Caco-2 (cell line): ENCODE measurements at regions of chr7 and their contacts with region 1.

Region 1: GRCh38 chr7:88169717-88170320 is 50.0 kb downstream of the SRI start:
- DNase-seq: peak in 1 of 2 experiments; percentile 13
- H3K4me3 ChIP-seq: no peak overlapping the region
- H3K4me3 Mint-ChIP-seq: no peak overlapping the region
- H3K27ac Mint-ChIP-seq: no peak overlapping the region
- H3K4me1 ChIP-seq: no peaks in the 10 kb centered on the region
- H3K4me1 Mint-ChIP-seq: no peaks in the 10 kb centered on the region
- H3K27me3 ChIP-seq: no peaks in the 10 kb centered on the region
- H3K27me3 Mint-ChIP-seq: no peaks in the 10 kb centered on the region
- CTCF ChIP-seq: peak in 1 of 2 experiments; percentile 54

Region 2: DNA sequence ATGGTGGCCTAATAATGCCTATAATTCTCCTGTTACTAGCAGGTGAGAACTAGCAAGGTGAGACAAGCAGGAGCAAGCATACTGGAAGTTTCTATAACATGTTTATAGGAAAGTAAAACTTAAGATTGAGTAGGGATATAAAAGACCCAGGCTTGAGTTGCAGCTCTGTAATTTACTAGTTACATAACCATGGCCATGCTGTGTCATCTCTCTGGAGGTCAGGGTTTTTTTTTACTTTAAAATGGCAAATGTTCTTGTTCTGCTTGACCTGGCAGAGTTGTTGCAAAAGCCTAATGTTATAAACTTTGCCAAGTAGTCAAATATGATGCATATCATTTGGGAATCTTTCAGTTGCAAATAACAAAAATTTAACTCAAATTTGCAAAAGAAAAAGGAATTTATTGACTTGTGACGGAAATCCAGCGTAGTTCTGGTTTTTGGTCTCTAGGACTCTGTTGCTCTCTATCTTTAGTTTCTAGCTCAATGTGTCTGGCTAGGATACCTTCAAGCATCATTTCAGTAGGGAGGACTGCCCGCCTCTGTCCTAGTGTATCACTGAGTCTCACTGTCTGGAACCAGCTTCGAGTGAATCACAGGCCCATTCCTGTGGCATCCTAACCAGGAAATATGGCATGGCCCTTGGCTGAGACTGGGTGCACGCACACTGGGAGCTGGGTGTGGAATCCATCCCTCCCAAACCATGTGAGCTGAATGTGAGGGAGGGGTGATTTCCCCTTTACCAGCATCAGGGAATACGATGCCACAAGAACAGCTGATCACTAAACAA is 167.9 kb before region 1 on chr7:
- CTCF ChIA-PET with region 1: no interaction called
- POLR2A ChIA-PET with region 1: no interaction called
- intact Hi-C with region 1: no loop called
- DNase-seq: no peak
- H3K4me3 ChIP-seq: no peak overlapping the region
- H3K4me3 Mint-ChIP-seq: no peak overlapping the region
- H3K27ac Mint-ChIP-seq: no peak overlapping the region
- H3K4me1 ChIP-seq: no peaks in the 10 kb centered on the region
- H3K4me1 Mint-ChIP-seq: no peaks in the 10 kb centered on the region
- H3K27me3 ChIP-seq: no peaks in the 10 kb centered on the region
- H3K27me3 Mint-ChIP-seq: no peaks in the 10 kb centered on the region
- CTCF ChIP-seq: no peak

Region 3: GRCh38 chr7:88140947-88141346 is 28.9 kb before region 1 on chr7:
- CTCF ChIA-PET with region 1: interaction called, 5 read pairs
- POLR2A ChIA-PET with region 1: no interaction called
- intact Hi-C with region 1: loop called (anchors 2 kb)
- DNase-seq: peak; percentile 62 to 75
- H3K4me3 ChIP-seq: no peak overlapping the region
- H3K4me3 Mint-ChIP-seq: no peak overlapping the region
- H3K27ac Mint-ChIP-seq: peak overlapping the region; percentile 62
- H3K4me1 ChIP-seq: peaks cover 16% of the 10 kb centered on the region
- H3K4me1 Mint-ChIP-seq: peaks cover 8% of the 10 kb centered on the region
- H3K27me3 ChIP-seq: no peaks in the 10 kb centered on the region
- H3K27me3 Mint-ChIP-seq: no peaks in the 10 kb centered on the region
- CTCF ChIP-seq: no peak

Region 4: DNA sequence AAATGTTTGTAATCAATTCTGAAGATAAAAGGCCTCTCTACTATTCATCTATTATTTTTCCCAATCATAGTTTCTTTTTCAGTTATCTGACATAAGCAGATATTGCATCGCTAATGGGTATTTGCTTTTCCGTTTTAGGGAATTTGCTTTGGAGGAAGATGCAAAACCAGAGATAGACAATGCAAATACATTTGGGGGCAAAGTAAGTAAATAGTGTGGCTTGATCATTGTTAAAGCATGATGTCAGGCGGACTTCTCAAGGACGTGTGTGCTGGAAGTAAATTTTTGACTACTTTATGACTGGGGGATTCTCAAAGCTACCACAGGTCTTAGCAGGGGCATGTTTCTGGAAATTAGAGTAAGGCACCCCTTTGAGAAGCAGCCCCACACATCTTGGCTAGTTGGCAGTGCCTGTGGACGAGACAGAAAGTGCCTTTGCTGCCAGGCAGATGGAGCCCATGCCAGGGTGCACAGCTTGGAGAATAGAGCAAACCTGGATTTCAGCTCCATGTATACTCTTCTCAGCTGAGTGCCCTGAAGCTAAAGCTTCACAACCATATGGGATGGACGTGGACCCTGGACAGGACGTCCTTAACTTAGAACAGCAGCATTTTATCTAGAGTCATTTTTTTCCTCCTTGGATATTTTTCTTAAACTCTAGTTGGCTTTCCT is 18.6 kb before region 1 on chr7:
- CTCF ChIA-PET with region 1: no interaction called
- POLR2A ChIA-PET with region 1: no interaction called
- intact Hi-C with region 1: loop called (anchors 1 kb)
- DNase-seq: no peak
- H3K4me3 ChIP-seq: no peak overlapping the region
- H3K4me3 Mint-ChIP-seq: no peak overlapping the region
- H3K27ac Mint-ChIP-seq: no peak overlapping the region
- H3K4me1 ChIP-seq: peaks cover 3% of the 10 kb centered on the region; the same call in 1 of the 2 replicates
- H3K4me1 Mint-ChIP-seq: peaks cover 19% of the 10 kb centered on the region
- H3K27me3 ChIP-seq: no peaks in the 10 kb centered on the region
- H3K27me3 Mint-ChIP-seq: no peaks in the 10 kb centered on the region
- CTCF ChIP-seq: no peak

Region 5: DNA sequence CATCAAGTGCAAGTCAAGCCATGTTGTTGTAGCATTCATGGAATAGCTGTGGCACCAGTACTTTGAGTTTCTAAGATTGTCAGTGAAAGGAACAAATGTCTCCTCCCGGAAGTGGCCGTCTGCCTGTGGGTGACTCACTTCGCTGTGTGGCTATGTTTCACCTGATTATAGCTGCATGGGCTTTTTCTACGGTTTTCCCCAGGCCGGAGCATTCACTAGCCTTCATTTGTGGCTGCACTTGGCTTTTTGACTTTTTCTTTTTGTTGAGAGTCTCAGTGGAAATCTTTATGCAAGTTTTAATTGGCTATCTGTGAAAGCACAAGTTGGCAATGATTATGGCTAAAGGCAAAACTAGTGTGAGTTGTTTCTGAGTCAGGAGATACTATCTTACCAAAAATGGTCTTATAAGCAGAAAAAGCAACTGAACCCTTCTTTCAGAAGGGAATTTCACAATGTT is 15.1 kb after region 1 on chr7:
- CTCF ChIA-PET with region 1: no interaction called
- POLR2A ChIA-PET with region 1: no interaction called
- intact Hi-C with region 1: no loop called
- DNase-seq: no peak
- H3K4me3 ChIP-seq: no peak overlapping the region
- H3K4me3 Mint-ChIP-seq: no peak overlapping the region
- H3K27ac Mint-ChIP-seq: no peak overlapping the region
- H3K4me1 ChIP-seq: no peaks in the 10 kb centered on the region
- H3K4me1 Mint-ChIP-seq: no peaks in the 10 kb centered on the region
- H3K27me3 ChIP-seq: no peaks in the 10 kb centered on the region
- H3K27me3 Mint-ChIP-seq: no peaks in the 10 kb centered on the region
- CTCF ChIP-seq: no peak